ENCODE measurements at regions of chr3 and their contacts with region 1.

Region 1: GRCh38 chr3:42195879-42196330 is 70.1 kb downstream of the CCK start:
- DNase-seq: no peak
- H3K4me3 ChIP-seq: no peak overlapping the region
- H3K27ac ChIP-seq: no peak overlapping the region
- H3K4me1 ChIP-seq: no peaks in the 10 kb centered on the region
- H3K27me3 ChIP-seq: no peaks in the 10 kb centered on the region
- CTCF ChIP-seq: no peak
- POLR2A ChIP-seq: no peak

Region 2: GRCh38 chr3:42129014-42129953 is 66.6 kb before region 1 on chr3:
- intact Hi-C with region 1: no loop called
- DNase-seq: peak in 1 of 2 donors; percentile 53
- H3K4me3 ChIP-seq: no peak overlapping the region
- H3K27ac ChIP-seq: peak overlapping the region; percentile 66 to 82
- H3K4me1 ChIP-seq: no peaks in the 10 kb centered on the region
- H3K27me3 ChIP-seq: no peaks in the 10 kb centered on the region
- CTCF ChIP-seq: no peak
- POLR2A ChIP-seq: no peak

Region 3: GRCh38 chr3:42164656-42165055 is 31.2 kb before region 1 on chr3:
- intact Hi-C with region 1: loop called (anchors 1 kb)
- DNase-seq: no peak
- H3K4me3 ChIP-seq: no peak overlapping the region
- H3K27ac ChIP-seq: peak overlapping the region in 1 of 2 donors; percentile 19
- H3K4me1 ChIP-seq: peaks cover 0 to 16% of the 10 kb centered on the region in 2 donors
- H3K27me3 ChIP-seq: no peaks in the 10 kb centered on the region
- CTCF ChIP-seq: no peak
- POLR2A ChIP-seq: no peak